CD8-positive, alpha-beta T cell (primary cell): ENCODE measurements at regions of chr10 and their contacts with region 1.

Region 1: GRCh38 chr10:96043033-96043932 is at the start of gene CCNJ:
- DNase-seq: peak; percentile 64 to 91 (median 82)
- ATAC-seq: peak; percentile 87
- H3K4me3 ChIP-seq: peak within 1 kb of the TSS; percentile 81 to 92
- H3K4me3 Mint-ChIP-seq: peak within 1 kb of the TSS; percentile 94
- H3K27ac ChIP-seq: peak within 1 kb of the TSS; percentile 70
- H3K27ac Mint-ChIP-seq: peak within 1 kb of the TSS; percentile 90
- H3K4me1 ChIP-seq: peaks cover 18% of the 10 kb centered on the region
- H3K4me1 Mint-ChIP-seq: peaks cover 48% of the 10 kb centered on the region
- H3K27me3 ChIP-seq: no peaks in the 10 kb centered on the region
- H3K27me3 Mint-ChIP-seq: peaks cover 5% of the 10 kb centered on the region
- CTCF ChIP-seq: no peak
- total RNA-seq, gene CCNJ: 10.0 to 10.7 TPM

Region 2: GRCh38 chr10:95561182-95562075 is 481.9 kb before region 1 on chr10 and contains the start of gene SORBS1:
- CTCF ChIA-PET with region 1: no interaction called
- POLR2A ChIA-PET with region 1: no interaction called
- intact Hi-C with region 1: loop called in 1 of 2 experiments (anchors 2 kb)
- DNase-seq: peak; percentile 73 to 95 (median 86)
- ATAC-seq: peak; percentile 97
- H3K4me3 ChIP-seq: peak within 1 kb of the TSS; percentile 71 to 99
- H3K4me3 Mint-ChIP-seq: peak within 1 kb of the TSS; percentile 99
- H3K27ac ChIP-seq: peak within 1 kb of the TSS in 1 of 2 experiments; percentile 59
- H3K27ac Mint-ChIP-seq: peak within 1 kb of the TSS; percentile 89
- H3K4me1 ChIP-seq: peaks cover 10% of the 10 kb centered on the region
- H3K4me1 Mint-ChIP-seq: peaks cover 10% of the 10 kb centered on the region
- H3K27me3 ChIP-seq: no peaks in the 10 kb centered on the region
- H3K27me3 Mint-ChIP-seq: peaks cover 10% of the 10 kb centered on the region
- CTCF ChIP-seq: no peak
- total RNA-seq, gene SORBS1: 3.0 to 3.9 TPM

Region 3: DNA sequence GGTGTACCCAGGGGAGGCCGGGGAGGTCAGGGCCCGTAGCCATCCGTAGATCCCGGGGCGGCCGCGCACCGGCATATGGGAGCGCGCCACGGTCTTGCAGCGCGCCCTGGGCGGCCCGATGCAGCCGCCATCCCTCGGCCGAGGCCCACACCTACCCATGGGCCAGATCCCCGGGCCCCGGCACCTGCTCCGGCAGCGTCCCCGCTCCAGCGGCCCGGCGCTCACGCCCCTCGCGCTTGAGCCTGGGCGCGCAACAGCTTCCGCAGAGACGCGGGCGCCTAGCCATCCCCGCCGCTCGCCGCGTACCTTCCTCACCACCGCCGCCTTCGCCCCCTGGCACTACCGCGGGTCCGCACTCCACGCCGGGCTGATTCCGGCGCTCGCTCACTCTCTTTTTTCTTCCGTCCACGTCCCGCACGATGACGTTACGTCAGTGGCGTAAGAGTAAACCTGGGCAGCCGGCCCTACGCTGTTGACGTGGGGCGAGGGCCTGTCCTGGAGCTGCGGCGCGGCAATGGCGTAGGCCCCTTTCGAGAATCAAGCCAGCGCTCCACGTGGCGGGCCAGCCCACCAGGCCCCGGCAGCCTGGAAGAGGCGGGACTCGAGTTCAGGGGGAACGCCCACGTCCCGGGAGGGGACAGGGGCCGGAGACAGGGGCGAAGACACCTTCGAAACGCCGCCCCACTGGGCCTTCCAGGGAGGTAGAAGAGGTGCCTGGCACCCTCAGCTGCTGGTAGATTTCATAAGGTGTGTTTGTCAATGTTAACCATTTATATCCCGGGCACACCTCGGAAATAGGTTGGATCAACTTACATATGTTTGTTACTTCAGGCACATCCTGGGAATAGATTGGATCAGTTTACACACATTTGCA is 386.8 kb before region 1 on chr10 and contains the start of gene ALDH18A1:
- CTCF ChIA-PET with region 1: no interaction called
- POLR2A ChIA-PET with region 1: no interaction called
- intact Hi-C with region 1: loop called in 1 of 2 experiments (anchors 10 kb)
- DNase-seq: peak; percentile 85 to 97 (median 91)
- ATAC-seq: peak; percentile 95
- H3K4me3 ChIP-seq: peak within 1 kb of the TSS; percentile 79 to 82
- H3K4me3 Mint-ChIP-seq: peak within 1 kb of the TSS; percentile 99
- H3K27ac ChIP-seq: peak within 1 kb of the TSS; percentile 40 to 52
- H3K27ac Mint-ChIP-seq: peak within 1 kb of the TSS; percentile 84
- H3K4me1 ChIP-seq: peaks cover 13% of the 10 kb centered on the region
- H3K4me1 Mint-ChIP-seq: peaks cover 29% of the 10 kb centered on the region
- H3K27me3 ChIP-seq: no peaks in the 10 kb centered on the region
- H3K27me3 Mint-ChIP-seq: no peaks in the 10 kb centered on the region
- CTCF ChIP-seq: no peak
- total RNA-seq, gene ALDH18A1: 8.3 to 11.4 TPM

Region 4: GRCh38 chr10:95907456-95908253 is 135.6 kb before region 1 on chr10 and contains the start of gene CC2D2B:
- CTCF ChIA-PET with region 1: no interaction called
- POLR2A ChIA-PET with region 1: no interaction called
- intact Hi-C with region 1: loop called in 1 of 2 experiments (anchors 2 kb)
- DNase-seq: peak; percentile 21 to 79 (median 59)
- ATAC-seq: peak; percentile 72
- H3K4me3 ChIP-seq: peak within 1 kb of the TSS; percentile 77 to 82
- H3K4me3 Mint-ChIP-seq: peak within 1 kb of the TSS; percentile 90
- H3K27ac ChIP-seq: peak within 1 kb of the TSS; percentile 61 to 67
- H3K27ac Mint-ChIP-seq: peak within 1 kb of the TSS; percentile 83
- H3K4me1 ChIP-seq: no peaks in the 10 kb centered on the region
- H3K4me1 Mint-ChIP-seq: peaks cover 18% of the 10 kb centered on the region
- H3K27me3 ChIP-seq: no peaks in the 10 kb centered on the region
- H3K27me3 Mint-ChIP-seq: no peaks in the 10 kb centered on the region
- CTCF ChIP-seq: no peak
- total RNA-seq, gene CC2D2B: not detected

Region 5: DNA sequence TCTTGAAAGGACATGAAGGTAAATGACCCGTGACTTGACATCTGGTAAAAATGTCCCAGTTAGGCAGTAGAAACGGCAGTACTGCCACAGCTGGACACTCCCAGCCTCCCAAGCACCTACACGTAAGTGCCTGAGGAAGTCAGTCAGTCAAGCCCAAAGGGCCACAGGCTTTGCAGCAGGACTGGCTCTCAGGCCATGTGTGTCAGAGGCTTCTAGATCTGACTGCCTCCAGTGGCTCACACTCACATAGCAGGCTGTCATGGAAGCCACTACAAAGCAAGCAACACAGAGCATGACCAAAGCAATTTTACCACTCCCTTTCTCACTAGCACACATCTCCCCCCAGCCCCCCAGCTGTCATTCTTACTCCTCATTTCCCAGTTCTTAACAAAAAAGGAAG is 17.7 kb before region 1 on chr10:
- CTCF ChIA-PET with region 1: no interaction called
- POLR2A ChIA-PET with region 1: no interaction called
- intact Hi-C with region 1: no loop called
- DNase-seq: peak in 1 of 9 experiments; percentile 4
- ATAC-seq: no peak
- H3K4me3 ChIP-seq: no peak overlapping the region
- H3K4me3 Mint-ChIP-seq: no peak overlapping the region
- H3K27ac ChIP-seq: no peak overlapping the region
- H3K27ac Mint-ChIP-seq: no peak overlapping the region
- H3K4me1 ChIP-seq: no peaks in the 10 kb centered on the region
- H3K4me1 Mint-ChIP-seq: no peaks in the 10 kb centered on the region
- H3K27me3 ChIP-seq: no peaks in the 10 kb centered on the region
- H3K27me3 Mint-ChIP-seq: no peaks in the 10 kb centered on the region
- CTCF ChIP-seq: no peak

Region 6: DNA sequence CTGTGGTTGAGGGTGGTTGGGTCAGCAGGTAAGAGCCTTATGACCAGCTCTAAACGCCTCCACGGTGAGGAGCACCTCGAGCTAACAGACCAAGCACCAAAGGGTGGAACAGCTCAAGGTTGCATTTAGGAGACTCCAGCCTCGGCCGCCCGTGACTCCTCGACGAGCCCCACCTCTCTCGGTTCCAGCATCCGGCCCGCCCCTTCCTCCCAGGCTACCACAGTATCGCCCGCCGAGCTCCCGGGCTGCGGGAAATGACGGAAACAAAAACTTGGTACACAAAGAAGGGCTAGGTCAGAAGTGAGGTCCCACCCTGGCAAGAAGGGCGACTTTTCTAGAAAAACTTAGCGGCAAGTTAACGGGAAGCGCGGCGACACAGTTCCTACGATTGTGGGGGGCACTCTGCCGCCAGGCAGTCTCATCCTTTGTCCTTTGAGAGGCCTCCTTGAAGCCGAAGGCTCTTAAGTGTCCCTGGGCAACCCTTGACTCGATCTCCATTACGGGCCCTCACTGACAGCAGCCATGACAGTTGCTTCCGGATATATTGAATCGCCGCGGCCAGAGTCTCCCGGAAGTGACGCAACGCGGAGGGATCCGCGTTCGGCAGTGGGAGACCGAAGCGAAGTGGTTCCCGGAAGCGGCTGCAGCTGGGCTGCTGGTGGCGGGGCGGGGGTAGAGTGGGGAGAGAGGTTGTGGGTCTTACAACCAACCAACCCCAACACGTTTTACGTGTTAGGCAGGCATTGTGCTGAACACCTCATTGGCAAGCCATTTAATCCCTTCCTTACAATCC is 46.6 kb after region 1 on chr10:
- CTCF ChIA-PET with region 1: no interaction called
- POLR2A ChIA-PET with region 1: interaction called, 5 read pairs
- intact Hi-C with region 1: loop called (anchors 1 to 2 kb)
- DNase-seq: peak; percentile 85 to 98 (median 92)
- ATAC-seq: peak; percentile 87
- H3K4me3 ChIP-seq: peak overlapping the region; percentile 69 to 71
- H3K4me3 Mint-ChIP-seq: peak overlapping the region; percentile 95
- H3K27ac ChIP-seq: peak overlapping the region; percentile 91 to 97
- H3K27ac Mint-ChIP-seq: peak overlapping the region; percentile 99
- H3K4me1 ChIP-seq: peaks cover 6% of the 10 kb centered on the region
- H3K4me1 Mint-ChIP-seq: peaks cover 12% of the 10 kb centered on the region
- H3K27me3 ChIP-seq: no peaks in the 10 kb centered on the region
- H3K27me3 Mint-ChIP-seq: peaks cover 21% of the 10 kb centered on the region
- CTCF ChIP-seq: no peak

Region 7: GRCh38 chr10:96129387-96130325 is 86.4 kb after region 1 on chr10 and contains the start of gene ZNF518A:
- CTCF ChIA-PET with region 1: no interaction called
- POLR2A ChIA-PET with region 1: interaction called, 10 read pairs
- intact Hi-C with region 1: loop called (anchors 1 to 2 kb)
- DNase-seq: peak; percentile 80 to 97 (median 88)
- ATAC-seq: peak; percentile 82
- H3K4me3 ChIP-seq: peak within 1 kb of the TSS; percentile 92 to 93
- H3K4me3 Mint-ChIP-seq: peak within 1 kb of the TSS; percentile 96
- H3K27ac ChIP-seq: peak within 1 kb of the TSS; percentile 98 to 99
- H3K27ac Mint-ChIP-seq: peak within 1 kb of the TSS; percentile 99
- H3K4me1 ChIP-seq: peaks cover 19% of the 10 kb centered on the region
- H3K4me1 Mint-ChIP-seq: peaks cover 25% of the 10 kb centered on the region
- H3K27me3 ChIP-seq: peaks cover 2 to 7% of the 10 kb centered on the region in 2 experiments
- H3K27me3 Mint-ChIP-seq: peaks cover 37% of the 10 kb centered on the region
- CTCF ChIP-seq: no peak
- total RNA-seq, gene ZNF518A: 8.7 to 9.3 TPM

Region 8: GRCh38 chr10:97434055-97434454 is 1390.8 kb after region 1 on chr10:
- CTCF ChIA-PET with region 1: no interaction called
- POLR2A ChIA-PET with region 1: no interaction called
- intact Hi-C with region 1: no loop called
- DNase-seq: no peak
- ATAC-seq: no peak
- H3K4me3 ChIP-seq: no peak overlapping the region
- H3K4me3 Mint-ChIP-seq: no peak overlapping the region
- H3K27ac ChIP-seq: no peak overlapping the region
- H3K27ac Mint-ChIP-seq: peak overlapping the region; percentile 37
- H3K4me1 ChIP-seq: no peaks in the 10 kb centered on the region
- H3K4me1 Mint-ChIP-seq: peaks cover 4% of the 10 kb centered on the region
- H3K27me3 ChIP-seq: no peaks in the 10 kb centered on the region
- H3K27me3 Mint-ChIP-seq: no peaks in the 10 kb centered on the region
- CTCF ChIP-seq: no peak

Region 9: GRCh38 chr10:97822261-97822687 is 1779.0 kb after region 1 on chr10:
- CTCF ChIA-PET with region 1: no interaction called
- POLR2A ChIA-PET with region 1: no interaction called
- intact Hi-C with region 1: loop called in 1 of 2 experiments (anchors 5 kb)
- DNase-seq: no peak
- ATAC-seq: no peak
- H3K4me3 ChIP-seq: no peak overlapping the region
- H3K4me3 Mint-ChIP-seq: no peak overlapping the region
- H3K27ac ChIP-seq: no peak overlapping the region
- H3K27ac Mint-ChIP-seq: no peak overlapping the region
- H3K4me1 ChIP-seq: no peaks in the 10 kb centered on the region
- H3K4me1 Mint-ChIP-seq: no peaks in the 10 kb centered on the region
- H3K27me3 ChIP-seq: no peaks in the 10 kb centered on the region
- H3K27me3 Mint-ChIP-seq: peaks cover 4% of the 10 kb centered on the region
- CTCF ChIP-seq: no peak